Cardiac septum (tissue), 1 donor: ENCODE measurements at regions of chr7 and their contacts with region 1.

Region 1: DNA sequence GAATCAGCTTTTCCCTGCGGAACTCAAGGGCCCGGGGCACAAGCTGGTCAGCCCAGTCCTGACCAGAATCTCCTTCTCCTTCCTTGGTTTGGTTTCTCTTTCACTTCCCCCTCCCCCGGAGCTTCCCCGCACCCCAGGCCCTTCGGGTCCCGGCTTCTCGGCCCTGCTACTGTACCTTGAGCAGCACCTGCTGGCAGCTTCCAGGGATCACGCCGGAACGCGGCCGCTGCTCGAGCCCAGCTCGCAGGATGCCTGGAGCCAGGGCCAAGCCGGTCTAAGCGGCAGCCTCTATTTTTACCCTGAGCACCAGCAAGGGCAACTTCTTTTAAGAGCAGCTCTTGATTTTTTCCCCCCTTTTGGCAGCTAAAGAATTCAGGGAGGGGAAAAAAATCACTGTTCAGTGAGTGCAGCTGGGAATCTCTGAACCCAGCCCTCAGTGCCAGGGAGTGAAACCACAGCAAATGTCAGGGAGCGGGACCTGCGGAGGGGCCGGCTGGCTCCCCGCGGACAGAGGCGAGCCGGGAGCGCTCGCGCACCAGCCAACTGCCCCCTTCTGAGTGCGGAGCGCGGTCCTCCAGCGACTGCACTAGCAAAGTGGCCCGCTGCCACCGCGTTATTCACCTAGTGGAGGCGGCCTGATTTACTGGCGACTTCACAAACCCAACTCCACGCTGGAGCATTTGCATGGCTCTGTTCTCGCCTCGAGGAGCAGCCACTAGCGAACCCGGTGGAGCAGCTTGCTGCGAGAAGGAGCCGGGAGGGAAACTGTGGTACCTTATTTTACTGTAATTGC is 2.4 kb upstream of the INHBA start:
- DNase-seq: peak; percentile 96

Region 2: GRCh38 chr7:40232242-40232893 is 1472.9 kb before region 1 on chr7:
- intact Hi-C with region 1: loop called (anchors 5 kb)
- DNase-seq: no peak

Region 3: GRCh38 chr7:40329601-40330153 is 1375.6 kb before region 1 on chr7:
- intact Hi-C with region 1: loop called (anchors 5 kb)
- DNase-seq: no peak

Region 4: GRCh38 chr7:41045556-41046123 is 659.7 kb before region 1 on chr7:
- intact Hi-C with region 1: loop called (anchors 2 kb)
- DNase-seq: no peak

Region 5: DNA sequence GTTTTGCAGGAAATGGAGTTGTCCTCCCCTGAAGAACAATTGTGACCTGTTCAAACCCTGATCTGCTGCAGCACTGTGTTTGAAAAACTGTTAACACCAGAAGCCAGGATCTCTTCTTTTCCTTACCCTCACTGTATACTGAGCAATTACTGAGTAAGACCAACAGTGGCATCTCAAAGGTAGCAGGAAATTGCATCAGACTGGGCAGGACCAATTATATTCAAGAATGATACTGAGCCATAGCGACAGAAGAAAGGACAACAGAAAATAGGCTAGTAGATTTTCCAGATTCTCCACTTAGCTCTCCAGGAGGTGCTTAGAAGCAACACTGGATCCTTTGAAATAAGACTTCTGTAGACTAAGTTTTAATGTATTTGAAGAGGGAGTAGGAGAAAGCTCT is 55.0 kb after region 1 on chr7:
- intact Hi-C with region 1: no loop called
- DNase-seq: no peak